Posterior vena cava (tissue), 2 donors: ENCODE measurements at regions of chr15 and their contacts with region 1.

Region 1: DNA sequence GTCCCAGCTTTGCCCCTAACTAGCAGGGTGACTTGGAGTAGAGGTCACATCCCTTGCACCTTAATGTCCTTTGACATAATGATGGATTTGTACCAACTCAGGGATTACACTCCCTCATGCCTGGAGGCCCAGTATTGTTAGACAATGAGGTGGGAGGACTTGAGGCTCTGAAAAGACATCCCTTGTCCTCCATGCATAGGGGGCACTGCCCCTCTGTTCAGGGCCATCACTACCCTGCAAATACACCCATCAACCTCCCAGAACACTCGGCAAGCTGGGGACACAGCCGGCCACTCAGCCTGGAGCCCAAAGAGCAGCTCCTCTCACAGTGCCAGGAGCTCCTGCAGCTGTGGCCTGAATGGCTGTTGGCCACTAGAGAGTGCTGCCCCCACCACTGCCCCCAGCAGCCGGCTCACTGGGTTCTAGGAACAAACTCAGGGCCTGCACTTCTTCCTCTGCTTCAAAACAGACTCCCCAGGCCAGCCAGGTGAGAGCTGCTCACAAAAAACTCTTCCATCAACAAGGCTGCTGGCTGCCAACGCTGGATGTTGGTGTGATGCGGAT is 90.2 kb downstream of the GABRB3 start:
- DNase-seq: no peak

Region 2: DNA sequence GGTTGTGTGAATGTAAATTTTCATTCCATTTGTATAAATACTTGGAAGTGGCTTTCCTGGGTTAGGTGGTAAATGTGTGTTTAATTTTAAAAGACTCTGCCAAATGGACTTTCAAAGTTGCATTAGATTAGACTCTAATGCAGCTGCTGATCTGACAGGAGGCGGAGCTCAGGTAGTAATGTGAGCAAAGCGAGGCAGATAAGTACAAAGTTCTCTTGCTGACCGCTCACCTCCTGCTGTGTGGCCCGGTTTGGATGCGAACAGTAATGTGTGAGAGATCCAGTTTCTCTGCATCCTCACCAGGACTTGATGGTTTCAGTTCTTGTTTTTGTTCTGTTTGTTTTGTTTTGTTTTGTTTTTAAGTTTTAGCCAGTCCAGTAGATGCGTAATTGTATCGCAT is 149.3 kb after region 1 on chr15:
- intact Hi-C with region 1: loop called in 1 of 2 experiments (anchors 5 kb)
- DNase-seq: no peak